ENCODE measurements at regions of chr1 and their contacts with region 1.

Region 1: DNA sequence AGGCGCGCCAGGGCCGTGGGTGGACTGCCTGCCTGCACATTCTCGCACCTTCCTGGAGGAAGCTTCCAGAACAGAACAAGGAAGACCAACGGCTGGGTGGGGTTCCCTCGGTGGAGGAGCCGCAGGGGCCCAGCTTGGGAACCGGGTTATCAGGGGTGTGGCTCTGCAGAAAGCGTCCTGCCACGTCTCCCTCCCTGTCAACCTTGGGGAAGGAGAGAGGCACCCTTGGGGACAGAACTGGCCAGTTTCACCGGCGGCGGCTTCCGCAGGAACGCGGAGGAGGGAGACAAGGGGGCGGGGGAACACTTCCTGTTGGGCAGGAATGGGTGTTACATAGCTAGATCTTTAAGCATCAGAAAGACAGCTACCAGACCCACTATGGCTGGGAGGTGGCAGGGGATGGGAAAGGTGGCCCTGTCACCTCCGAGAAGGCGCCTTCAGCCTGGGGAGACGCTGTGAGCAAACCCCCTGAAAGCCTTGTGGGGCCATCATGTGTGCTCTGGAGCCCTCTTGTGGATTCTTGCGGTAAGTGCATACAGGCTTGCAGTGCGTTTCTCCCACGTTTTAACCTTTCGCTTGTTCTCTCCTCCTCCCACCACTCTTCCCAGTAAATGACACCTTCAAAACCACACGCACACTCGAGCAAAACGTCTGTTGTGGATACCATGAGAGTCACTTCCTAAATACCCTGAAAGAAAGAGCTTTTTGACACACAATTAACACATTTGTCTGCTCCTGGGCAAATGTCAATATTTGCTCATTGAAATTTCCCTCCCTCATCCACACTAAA is 3.8 kb upstream of the PLEKHA6 start:
- DNase-seq: peak in 8 of 10 donors; percentile 65 to 93 (median 71)

Region 2: DNA sequence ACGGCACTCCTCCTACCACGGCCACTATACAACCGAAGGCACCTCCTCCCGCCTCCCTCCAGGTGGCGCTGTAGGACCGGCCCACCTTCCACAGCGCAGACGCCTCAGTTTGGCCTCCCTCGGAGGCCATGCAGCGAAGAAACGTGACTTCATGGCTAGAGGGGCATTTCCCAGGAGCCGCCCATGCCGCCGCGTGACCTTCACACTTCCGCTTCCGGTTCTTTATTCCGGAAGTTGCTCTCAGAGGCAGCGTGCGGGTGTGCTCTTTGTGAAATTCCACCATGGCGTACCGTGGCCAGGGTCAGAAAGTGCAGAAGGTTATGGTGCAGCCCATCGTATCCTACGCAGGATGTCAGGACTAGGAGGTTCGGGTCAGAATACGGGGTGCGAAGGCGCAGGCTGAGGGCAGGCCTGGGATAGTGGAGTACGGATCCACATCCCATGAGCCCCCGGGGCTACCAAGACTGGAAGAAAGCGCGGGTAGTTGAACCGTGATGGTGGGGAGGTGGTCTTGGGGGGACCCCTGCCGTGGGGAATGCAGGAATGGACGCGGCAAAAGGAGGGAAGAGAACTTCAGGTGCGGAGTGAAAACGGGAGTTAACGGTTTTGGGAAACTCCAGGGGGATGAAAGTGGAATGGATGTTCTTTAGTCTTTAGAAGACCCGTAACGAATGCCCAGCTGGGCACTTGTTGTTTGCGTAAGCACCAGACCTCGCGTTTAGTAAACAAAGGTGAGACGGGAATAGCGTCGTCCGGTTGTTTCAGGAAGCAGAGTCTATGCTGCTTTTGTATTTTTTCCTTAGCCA is 501.9 kb before region 1 on chr1 and contains the start of gene SNRPE:
- intact Hi-C with region 1: loop called (anchors 10 kb)
- DNase-seq: peak; percentile 93 to 99 (median 96)

Region 3: DNA sequence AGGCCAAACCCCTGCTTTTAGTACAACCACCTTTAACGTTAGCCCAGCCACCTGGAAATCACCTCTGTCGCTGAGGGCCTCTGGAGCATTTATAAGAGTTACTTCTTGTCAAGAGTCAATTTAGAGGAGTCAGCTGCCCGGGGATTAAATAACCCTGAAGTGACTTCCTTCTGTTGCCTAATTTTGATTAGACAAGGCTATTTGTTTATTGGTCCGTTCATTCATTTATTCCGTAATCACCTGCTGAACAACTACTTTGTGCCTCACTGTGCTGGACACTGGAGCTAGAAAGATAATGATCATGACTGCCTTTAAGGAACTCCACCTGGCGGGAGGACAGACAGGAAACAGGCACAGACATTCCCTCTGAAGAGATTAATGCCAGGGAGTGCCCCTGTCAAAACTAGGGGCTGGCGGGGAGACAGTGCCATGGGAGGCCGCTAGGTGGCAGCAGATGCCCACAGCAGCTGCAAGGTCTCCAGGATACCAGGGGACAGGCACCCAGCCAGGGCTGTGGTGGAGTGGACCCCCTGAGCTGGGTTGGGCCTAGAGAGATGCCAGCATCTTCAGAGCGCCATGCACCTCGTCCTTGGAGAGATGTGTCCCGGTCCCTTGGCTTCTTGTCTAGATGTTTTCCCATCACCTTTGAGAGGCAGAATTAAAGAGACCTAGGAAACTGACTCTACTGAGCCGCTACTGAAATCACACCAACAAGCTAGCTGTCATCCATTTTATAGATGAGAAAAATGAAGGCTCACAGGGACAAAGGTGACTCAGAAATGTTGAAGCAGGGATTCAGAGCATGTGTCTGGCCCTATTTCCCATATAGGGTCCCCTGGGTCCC is 201.1 kb before region 1 on chr1:
- intact Hi-C with region 1: loop called (anchors 1 kb)
- DNase-seq: peak; percentile 71 to 97 (median 84)

Region 4: DNA sequence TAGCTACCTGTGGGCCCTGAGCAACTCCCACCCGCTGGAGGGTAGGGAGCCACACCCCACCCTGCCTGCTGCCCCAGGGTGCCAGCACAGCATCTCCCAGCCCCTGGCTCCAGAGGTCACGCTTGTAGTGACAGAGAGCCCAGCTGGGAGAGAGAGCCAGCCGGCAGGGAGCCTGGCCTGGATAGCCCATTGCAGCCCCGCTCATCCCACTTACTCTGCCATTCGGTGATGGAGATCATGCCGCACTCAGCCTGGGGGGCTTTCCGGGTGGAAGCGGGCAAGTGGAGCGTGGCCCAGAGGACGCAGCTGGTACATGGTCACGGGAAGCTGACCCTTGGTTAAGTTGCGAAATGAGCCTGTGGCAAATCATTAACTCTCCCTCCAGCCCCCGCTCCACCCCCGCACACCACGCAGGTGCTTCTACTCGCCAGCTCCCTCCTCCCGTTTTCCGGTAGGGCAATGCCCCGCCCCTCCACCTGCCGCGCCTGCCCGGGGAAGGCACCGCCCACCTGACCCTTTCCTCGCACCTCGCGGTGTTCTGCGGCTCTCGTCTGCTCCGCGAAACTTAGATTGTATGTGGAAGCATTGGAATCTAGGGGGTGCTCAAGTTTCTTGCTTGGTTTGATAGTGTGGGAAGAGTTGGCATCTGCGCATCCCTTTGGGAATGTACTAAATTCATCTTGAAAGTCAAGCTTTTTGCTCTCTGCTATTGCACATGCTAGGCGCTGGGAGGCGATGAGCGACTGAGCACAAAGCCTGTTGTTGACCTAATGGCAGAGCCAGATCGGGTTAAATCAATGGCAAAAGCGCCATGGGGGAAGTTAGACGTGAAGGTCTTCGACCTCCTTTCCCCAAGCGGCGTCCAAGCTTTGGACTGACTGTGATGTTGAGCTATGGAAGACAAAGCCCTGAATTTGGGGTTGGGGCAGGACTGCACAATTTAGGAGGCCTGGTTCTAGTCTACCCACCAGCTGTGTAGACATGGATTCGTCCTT is 149.6 kb before region 1 on chr1 and contains the start of gene GOLT1A:
- intact Hi-C with region 1: loop called (anchors 1 kb)
- DNase-seq: peak in 9 of 10 donors; percentile 59 to 96 (median 67)

Region 5: GRCh38 chr1:204257954-204258752 is 105.4 kb before region 1 on chr1:
- intact Hi-C with region 1: loop called (anchors 1 kb)
- DNase-seq: peak in 9 of 10 donors; percentile 62 to 96 (median 75)

Region 6: GRCh38 chr1:204263254-204263910 is 100.1 kb before region 1 on chr1:
- intact Hi-C with region 1: loop called (anchors 1 kb)
- DNase-seq: peak in 3 of 10 donors; percentile 69 to 84 (median 84)

Region 7: DNA sequence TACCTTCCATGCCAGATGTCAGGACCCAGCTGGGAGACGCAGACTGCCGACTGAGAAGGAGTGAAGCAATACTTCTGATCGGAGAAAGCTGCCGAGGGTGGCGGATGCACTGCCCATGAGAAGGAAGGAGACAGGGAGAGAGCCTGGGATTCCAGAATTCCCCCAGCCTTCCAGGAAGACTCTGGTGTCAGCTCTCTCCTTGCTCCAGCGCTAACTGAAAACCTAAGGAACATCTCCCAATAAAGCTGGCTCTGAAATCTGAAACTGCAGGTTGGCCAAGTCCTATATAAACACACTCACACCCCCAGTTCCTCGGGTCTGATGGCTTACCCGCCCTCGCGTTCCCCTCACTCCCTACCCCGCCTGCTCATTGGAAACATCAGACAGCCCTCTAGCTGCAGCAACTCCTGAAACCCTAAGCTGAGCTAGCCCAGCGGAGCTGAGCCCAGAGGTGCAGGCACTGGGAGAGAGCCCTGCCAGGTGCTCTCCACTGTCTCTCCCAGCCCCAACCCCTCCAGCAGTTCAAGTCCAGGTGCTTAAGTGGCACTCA is 56.1 kb before region 1 on chr1:
- intact Hi-C with region 1: loop called (anchors 10 kb)
- DNase-seq: peak in 9 of 10 donors; percentile 36 to 94 (median 64)

Region 8: DNA sequence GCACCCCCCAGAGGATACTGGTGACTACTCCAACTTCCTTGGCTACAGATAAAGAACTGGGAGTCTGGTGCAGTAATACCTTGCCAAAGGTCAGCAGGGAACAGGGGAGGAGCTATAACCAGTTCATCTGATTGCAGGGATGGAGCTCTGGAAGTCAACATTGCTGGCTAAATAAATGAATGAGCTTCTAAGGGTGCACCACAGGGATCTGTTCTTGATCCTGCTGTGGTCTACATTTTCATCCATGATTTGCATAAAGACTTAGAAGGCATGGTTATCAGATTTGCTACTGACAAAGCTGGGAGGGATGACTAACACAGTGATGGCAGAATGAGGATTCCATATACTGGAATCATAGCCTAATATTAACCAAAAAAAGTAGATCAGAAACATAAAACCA is 22.1 kb before region 1 on chr1:
- intact Hi-C with region 1: no loop called
- DNase-seq: no peak

Measured in posterior cingulate gyrus (tissue), 11 donors.